ENCODE measurements at regions of chr10 and their contacts with region 1.

Region 1: GRCh38 chr10:31345886-31346285 is 26.9 kb downstream of the ZEB1 start:
- DNase-seq: no peak
- ATAC-seq: no peak
- H3K4me3 Mint-ChIP-seq: no peak overlapping the region
- H3K27ac Mint-ChIP-seq: no peak overlapping the region
- H3K4me1 Mint-ChIP-seq: peaks cover 53% of the 10 kb centered on the region
- H3K27me3 Mint-ChIP-seq: no peaks in the 10 kb centered on the region
- CTCF ChIP-seq: no peak

Region 2: DNA sequence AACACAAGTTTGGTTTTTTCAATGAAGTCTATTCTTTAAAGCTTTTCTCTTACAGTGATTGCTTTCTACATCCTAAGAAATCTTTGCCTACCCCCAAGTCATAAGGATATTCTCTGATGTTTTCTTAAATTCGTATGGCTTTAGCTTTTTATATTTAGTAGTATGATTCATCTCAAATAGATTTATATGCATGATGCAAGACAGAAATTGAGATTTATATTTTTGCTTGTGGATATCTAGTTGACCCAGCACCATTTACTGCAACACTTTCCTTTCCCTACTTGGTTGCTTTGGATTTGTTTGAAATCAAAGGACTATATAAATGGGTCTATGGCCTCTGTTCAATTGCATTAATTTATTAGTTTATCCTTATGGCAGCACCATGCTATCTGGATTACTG is 428.1 kb before region 1 on chr10:
- CTCF ChIA-PET with region 1: no interaction called
- POLR2A ChIA-PET with region 1: no interaction called
- intact Hi-C with region 1: no loop called
- DNase-seq: no peak
- ATAC-seq: no peak
- H3K4me3 Mint-ChIP-seq: no peak overlapping the region
- H3K27ac Mint-ChIP-seq: no peak overlapping the region
- H3K4me1 Mint-ChIP-seq: no peaks in the 10 kb centered on the region
- H3K27me3 Mint-ChIP-seq: no peaks in the 10 kb centered on the region
- CTCF ChIP-seq: no peak

Region 3: GRCh38 chr10:31383810-31384588 is 38.1 kb after region 1 on chr10:
- CTCF ChIA-PET with region 1: no interaction called
- POLR2A ChIA-PET with region 1: no interaction called
- intact Hi-C with region 1: loop called (anchors 5 kb)
- DNase-seq: no peak
- ATAC-seq: peak; percentile 86
- H3K4me3 Mint-ChIP-seq: peak overlapping the region; percentile 47
- H3K27ac Mint-ChIP-seq: peak overlapping the region; percentile 65
- H3K4me1 Mint-ChIP-seq: peaks cover 22% of the 10 kb centered on the region
- H3K27me3 Mint-ChIP-seq: no peaks in the 10 kb centered on the region
- CTCF ChIP-seq: no peak

Measured in activated B cell treated with CpG ODN at 0.5 μM for 24 hours (primary cell).